H1 (cell line): ENCODE measurements at regions of chr1 and their contacts with region 1.

Region 1: GRCh38 chr1:110011527-110012041 is 22.8 kb upstream of the STRIP1 start:
- DNase-seq: peak in 1 of 2 experiments; percentile 49
- H3K4me3 ChIP-seq: no peak overlapping the region
- H3K27ac ChIP-seq: no peak overlapping the region
- H3K4me1 ChIP-seq: peaks cover 0 to 9% (median 5%) of the 10 kb centered on the region in 4 experiments; a peak in 3 of 7 replicates
- H3K27me3 ChIP-seq: no peaks in the 10 kb centered on the region
- CTCF ChIP-seq: peak; percentile 5 to 68 (median 47)
- EP300 ChIP-seq: no peak
- POLR2A ChIP-seq: no peak
- RAD21 ChIP-seq: peak; percentile 67 to 74

Region 2: DNA sequence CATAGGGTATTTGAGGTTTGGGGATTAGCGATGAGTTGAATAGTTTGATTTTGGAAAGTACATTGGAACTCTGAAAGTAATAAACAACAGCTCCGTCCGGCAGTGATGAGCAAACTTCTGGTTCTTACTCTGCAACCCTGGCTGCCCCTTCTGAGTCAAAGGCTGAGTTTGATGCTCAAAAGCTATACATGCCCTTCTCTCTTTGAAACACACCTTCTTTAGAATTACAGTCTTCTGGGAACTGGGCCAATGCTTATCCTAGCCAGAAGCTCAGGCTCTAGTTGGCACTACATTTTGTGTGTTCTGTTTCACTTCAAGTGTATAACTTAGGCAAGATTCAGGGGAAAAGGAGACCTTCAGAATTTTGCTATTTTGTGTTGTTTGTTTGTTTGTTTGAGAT is 17.7 kb before region 1 on chr1:
- CTCF ChIA-PET with region 1: interaction called, 15 read pairs
- POLR2A ChIA-PET with region 1: interaction called, 4 read pairs
- DNase-seq: no peak
- H3K4me3 ChIP-seq: no peak overlapping the region
- H3K27ac ChIP-seq: no peak overlapping the region
- H3K4me1 ChIP-seq: peaks cover 0 to 3% (median 0%) of the 10 kb centered on the region in 4 experiments; a peak in 1 of 7 replicates
- H3K27me3 ChIP-seq: no peaks in the 10 kb centered on the region
- CTCF ChIP-seq: no peak
- EP300 ChIP-seq: no peak
- POLR2A ChIP-seq: no peak
- RAD21 ChIP-seq: no peak